ENCODE measurements at regions of chr9 and their contacts with region 1.

Region 1: DNA sequence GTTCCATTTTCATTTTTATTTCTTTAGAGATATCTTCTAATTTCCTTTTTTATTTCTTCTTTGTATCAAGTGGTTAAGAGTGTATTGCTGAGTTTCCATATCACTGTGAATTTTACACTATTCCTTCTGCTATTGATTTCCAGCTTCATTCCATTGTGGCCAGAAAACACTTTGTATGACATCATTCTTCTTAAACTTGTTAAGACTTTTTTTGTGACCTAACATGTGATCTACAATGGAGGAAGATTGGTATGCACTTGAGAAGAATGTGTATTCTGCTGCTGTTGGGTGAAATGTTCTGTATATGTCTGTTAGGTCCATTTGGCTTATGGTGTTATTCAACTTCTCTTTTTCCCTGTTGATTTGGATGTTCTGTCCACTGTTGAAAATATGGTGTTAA is 274.2 kb upstream of the PUM3 start:
- DNase-seq: no peak
- H3K4me3 ChIP-seq: no peak overlapping the region
- H3K27ac ChIP-seq: no peak overlapping the region
- H3K4me1 ChIP-seq: no peaks in the 10 kb centered on the region
- H3K27me3 ChIP-seq: no peaks in the 10 kb centered on the region
- CTCF ChIP-seq: no peak
- POLR2A ChIP-seq: no peak

Region 2: DNA sequence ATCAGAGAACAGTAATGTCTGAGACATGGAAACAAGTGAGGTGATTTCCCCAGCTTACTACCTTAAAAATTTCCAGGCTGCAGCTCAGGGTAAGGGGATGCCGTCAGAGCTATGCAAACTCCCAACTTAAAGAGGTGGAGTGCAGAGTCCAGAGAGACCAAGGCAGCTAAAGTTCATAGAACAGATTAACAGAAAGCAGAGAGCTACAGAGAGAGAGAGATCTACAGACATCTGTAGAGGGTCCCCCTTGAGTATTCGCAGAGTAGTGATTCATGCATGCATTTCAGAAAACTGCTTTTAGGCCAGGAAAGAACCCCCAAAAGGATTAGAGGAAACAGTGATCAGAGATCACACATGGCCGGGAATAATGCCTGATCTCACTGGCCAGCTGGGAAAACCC is 32.0 kb after region 1 on chr9:
- intact Hi-C with region 1: loop called (anchors 2 kb)
- DNase-seq: no peak
- H3K4me3 ChIP-seq: no peak overlapping the region
- H3K27ac ChIP-seq: no peak overlapping the region
- H3K4me1 ChIP-seq: no peaks in the 10 kb centered on the region
- H3K27me3 ChIP-seq: no peaks in the 10 kb centered on the region
- CTCF ChIP-seq: no peak
- POLR2A ChIP-seq: no peak

Region 3: GRCh38 chr9:3868012-3868411 is 749.9 kb after region 1 on chr9:
- intact Hi-C with region 1: no loop called
- DNase-seq: no peak
- H3K4me3 ChIP-seq: no peak overlapping the region
- H3K27ac ChIP-seq: no peak overlapping the region
- H3K4me1 ChIP-seq: no peaks in the 10 kb centered on the region
- H3K27me3 ChIP-seq: no peaks in the 10 kb centered on the region
- CTCF ChIP-seq: no peak
- POLR2A ChIP-seq: no peak

Measured in breast epithelium (tissue), 4 donors.